ENCODE measurements at regions of chr3 and their contacts with region 1.

Region 1: GRCh38 chr3:154252759-154253638 is 71.3 kb downstream of the DHX36 start:
- DNase-seq: peak; percentile 51
- H3K4me3 Mint-ChIP-seq: no peak overlapping the region
- H3K27ac Mint-ChIP-seq: no peak overlapping the region
- H3K4me1 Mint-ChIP-seq: peaks cover 2% of the 10 kb centered on the region
- H3K27me3 Mint-ChIP-seq: no peaks in the 10 kb centered on the region

Region 2: GRCh38 chr3:153026026-153026425 is 1227.0 kb before region 1 on chr3:
- intact Hi-C with region 1: loop called (anchors 1 kb)
- DNase-seq: no peak
- H3K4me3 Mint-ChIP-seq: no peak overlapping the region
- H3K27ac Mint-ChIP-seq: no peak overlapping the region
- H3K4me1 Mint-ChIP-seq: no peaks in the 10 kb centered on the region
- H3K27me3 Mint-ChIP-seq: peaks cover 11% of the 10 kb centered on the region

Region 3: DNA sequence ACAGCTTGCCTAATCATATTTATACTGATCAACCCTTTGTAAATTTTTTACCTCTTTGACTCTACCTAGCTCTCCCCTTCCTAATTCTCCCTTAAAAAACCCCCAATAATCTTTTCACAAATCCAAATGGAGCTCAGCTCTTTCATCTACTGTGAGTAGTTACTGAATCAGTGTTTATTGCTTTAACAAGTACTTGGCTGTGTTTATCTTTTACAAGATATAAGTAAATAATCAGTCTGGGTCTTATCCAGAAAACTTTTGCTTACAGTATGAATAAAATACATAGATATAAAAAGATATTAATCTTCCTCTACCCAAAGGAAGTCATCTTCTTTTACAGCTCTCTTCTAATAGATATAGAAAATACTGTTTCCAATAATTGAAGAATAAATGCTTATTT is 724.5 kb before region 1 on chr3:
- intact Hi-C with region 1: no loop called
- DNase-seq: no peak
- H3K4me3 Mint-ChIP-seq: no peak overlapping the region
- H3K27ac Mint-ChIP-seq: no peak overlapping the region
- H3K4me1 Mint-ChIP-seq: no peaks in the 10 kb centered on the region
- H3K27me3 Mint-ChIP-seq: no peaks in the 10 kb centered on the region

Region 4: DNA sequence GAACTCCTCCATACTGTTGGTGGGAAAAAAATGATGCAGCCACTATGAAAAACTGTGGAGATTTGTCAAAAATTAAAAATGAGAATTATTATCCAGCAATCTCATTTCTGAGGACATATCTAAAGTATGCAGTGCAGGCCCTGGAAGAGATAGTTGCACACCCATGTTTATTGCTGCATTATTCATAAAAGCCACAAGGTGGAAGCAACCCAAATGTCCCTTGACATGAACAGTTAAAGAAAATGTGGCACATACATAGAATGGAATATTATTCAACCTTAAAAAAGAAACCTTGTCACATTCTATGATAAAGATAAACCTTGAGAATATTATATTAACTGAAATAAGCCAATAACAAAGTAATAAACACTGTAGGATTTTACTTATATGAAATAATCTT is 212.7 kb before region 1 on chr3:
- intact Hi-C with region 1: loop called (anchors 1 kb)
- DNase-seq: no peak
- H3K4me3 Mint-ChIP-seq: no peak overlapping the region
- H3K27ac Mint-ChIP-seq: no peak overlapping the region
- H3K4me1 Mint-ChIP-seq: no peaks in the 10 kb centered on the region
- H3K27me3 Mint-ChIP-seq: no peaks in the 10 kb centered on the region

Region 5: GRCh38 chr3:154095832-154096421 is 157.1 kb before region 1 on chr3:
- intact Hi-C with region 1: loop called (anchors 1 kb)
- DNase-seq: no peak
- H3K4me3 Mint-ChIP-seq: no peak overlapping the region
- H3K27ac Mint-ChIP-seq: no peak overlapping the region
- H3K4me1 Mint-ChIP-seq: no peaks in the 10 kb centered on the region
- H3K27me3 Mint-ChIP-seq: peaks cover 6% of the 10 kb centered on the region

Region 6: DNA sequence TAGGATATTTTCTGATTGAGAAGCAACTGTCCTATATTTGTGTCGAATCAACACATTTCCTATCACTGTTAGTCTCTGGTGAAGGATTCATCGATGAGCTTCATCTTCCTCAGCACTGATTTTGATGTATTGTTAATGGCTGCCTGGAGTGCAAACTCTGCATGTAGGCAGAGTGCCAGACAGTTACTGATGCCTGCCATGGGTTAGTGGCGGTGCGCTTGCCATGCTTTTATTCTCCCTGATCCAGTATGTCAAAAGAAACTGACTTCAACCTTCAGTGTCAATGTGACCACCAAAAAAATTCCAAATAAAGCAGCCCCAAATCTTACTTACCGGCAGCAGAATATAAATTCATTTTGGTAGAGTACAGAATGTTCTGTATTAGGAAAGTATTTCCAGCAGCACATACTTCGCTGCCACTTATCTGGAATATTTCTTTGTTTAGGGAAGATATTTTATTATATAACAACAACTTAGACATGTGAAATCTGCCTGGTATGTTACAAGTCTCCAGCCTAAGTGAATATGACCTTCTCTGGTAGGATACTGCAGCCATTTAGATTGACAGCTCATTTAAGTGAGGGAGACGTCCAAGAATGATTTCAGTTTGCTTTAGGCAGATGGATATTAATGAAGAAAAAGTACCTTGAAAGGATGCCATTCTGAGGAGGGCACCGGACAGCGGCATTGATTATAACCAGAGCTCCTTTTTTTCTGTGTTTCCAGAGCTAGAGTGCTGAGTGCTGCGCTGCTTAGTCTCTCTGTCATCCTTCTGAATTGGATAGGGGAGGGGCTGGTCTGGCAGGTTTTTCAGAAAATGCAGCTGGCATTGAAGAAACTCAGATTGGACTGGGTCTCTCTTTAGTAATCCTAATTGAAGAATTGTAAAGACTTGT is 71.9 kb before region 1 on chr3:
- intact Hi-C with region 1: no loop called
- DNase-seq: no peak
- H3K4me3 Mint-ChIP-seq: no peak overlapping the region
- H3K27ac Mint-ChIP-seq: no peak overlapping the region
- H3K4me1 Mint-ChIP-seq: no peaks in the 10 kb centered on the region
- H3K27me3 Mint-ChIP-seq: no peaks in the 10 kb centered on the region

Region 7: GRCh38 chr3:154235330-154235729 is 17.7 kb before region 1 on chr3:
- intact Hi-C with region 1: no loop called
- DNase-seq: no peak
- H3K4me3 Mint-ChIP-seq: no peak overlapping the region
- H3K27ac Mint-ChIP-seq: no peak overlapping the region
- H3K4me1 Mint-ChIP-seq: peaks cover 21% of the 10 kb centered on the region
- H3K27me3 Mint-ChIP-seq: no peaks in the 10 kb centered on the region

Measured in activated T-helper 2 cell treated with anti-CD3 and anti-CD28 coated beads, Interferon-gamma antibody, Interleukin-2, Interleukin-4, amounts not matched to agents 10 μg/mL and 5 μg/mL and 100 μg/mL, durations not matched to agents 14 hours and 24 hours and 36 hours (primary cell).